SK-N-SH (cell line): ENCODE measurements at regions of chr15 and their contacts with region 1.

Region 1: GRCh38 chr15:20344601-20345400 is 196.8 kb downstream of the GOLGA6L6 start:
- DNase-seq: peak; percentile 26
- H3K4me3 ChIP-seq: no peak overlapping the region
- H3K27ac ChIP-seq: no peak overlapping the region
- H3K4me1 ChIP-seq: no peaks in the 10 kb centered on the region
- H3K27me3 ChIP-seq: peaks cover 26% of the 10 kb centered on the region
- CTCF ChIP-seq: no peak
- EP300 ChIP-seq: no peak
- RAD21 ChIP-seq: no peak

Region 2: DNA sequence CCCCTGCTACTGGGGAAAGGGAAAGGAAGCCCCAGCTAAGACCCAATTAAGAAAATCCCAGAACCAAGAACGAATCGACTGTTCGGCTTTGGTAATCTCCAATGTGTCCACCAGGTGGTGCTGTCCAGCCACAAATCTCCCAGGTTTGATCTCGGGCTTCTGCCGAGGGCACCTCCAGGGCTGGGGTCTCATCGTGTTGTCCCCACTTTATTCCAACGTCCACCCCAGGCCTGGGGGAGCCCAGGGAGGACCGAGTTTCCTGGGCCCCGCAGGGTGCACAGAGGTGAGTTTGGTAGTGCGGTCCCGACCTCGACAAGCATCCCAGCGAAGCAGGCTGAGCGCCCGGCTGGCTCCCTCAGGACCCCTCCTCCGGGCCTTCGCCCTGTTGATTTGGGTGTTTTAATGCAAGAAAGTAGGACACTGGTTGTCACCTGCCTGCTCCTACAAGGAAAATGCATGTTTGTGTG is 11.7 kb after region 1 on chr15:
- CTCF ChIA-PET with region 1: interaction called, 14 read pairs
- POLR2A ChIA-PET with region 1: no interaction called
- DNase-seq: peak; percentile 88
- H3K4me3 ChIP-seq: peak overlapping the region; percentile 39 to 54
- H3K27ac ChIP-seq: no peak overlapping the region
- H3K4me1 ChIP-seq: peaks cover 0 to 7% of the 10 kb centered on the region in 2 experiments; a peak in 1 of 4 replicates
- H3K27me3 ChIP-seq: peaks cover 32% of the 10 kb centered on the region; the same call in 1 of the 2 replicates
- CTCF ChIP-seq: peak; percentile 90
- EP300 ChIP-seq: no peak
- RAD21 ChIP-seq: peak; percentile 95

Region 3: DNA sequence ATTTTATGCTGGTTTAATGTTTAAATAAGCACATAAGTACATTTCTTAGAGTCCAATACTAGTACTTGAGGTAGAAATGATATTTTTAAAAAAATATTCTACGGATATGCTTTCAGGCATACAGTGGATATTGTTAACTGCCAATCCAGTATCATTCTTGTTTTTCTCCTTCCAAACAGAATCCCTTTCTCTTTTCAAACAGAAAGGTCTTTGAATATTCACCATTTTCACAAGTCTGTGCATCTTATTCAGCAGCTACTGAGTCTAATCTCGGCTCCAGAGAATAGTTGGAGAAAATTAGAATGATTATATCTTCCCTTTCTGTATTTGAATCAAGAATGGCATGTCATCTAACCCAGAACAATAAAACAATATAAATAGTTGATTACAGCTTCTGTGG is 22.3 kb after region 1 on chr15:
- CTCF ChIA-PET with region 1: no interaction called
- POLR2A ChIA-PET with region 1: no interaction called
- DNase-seq: no peak
- H3K4me3 ChIP-seq: no peak overlapping the region
- H3K27ac ChIP-seq: no peak overlapping the region
- H3K4me1 ChIP-seq: no peaks in the 10 kb centered on the region
- H3K27me3 ChIP-seq: no peaks in the 10 kb centered on the region
- CTCF ChIP-seq: no peak
- EP300 ChIP-seq: no peak
- RAD21 ChIP-seq: no peak